ENCODE measurements at regions of chr2 and their contacts with region 1.

Region 1: DNA sequence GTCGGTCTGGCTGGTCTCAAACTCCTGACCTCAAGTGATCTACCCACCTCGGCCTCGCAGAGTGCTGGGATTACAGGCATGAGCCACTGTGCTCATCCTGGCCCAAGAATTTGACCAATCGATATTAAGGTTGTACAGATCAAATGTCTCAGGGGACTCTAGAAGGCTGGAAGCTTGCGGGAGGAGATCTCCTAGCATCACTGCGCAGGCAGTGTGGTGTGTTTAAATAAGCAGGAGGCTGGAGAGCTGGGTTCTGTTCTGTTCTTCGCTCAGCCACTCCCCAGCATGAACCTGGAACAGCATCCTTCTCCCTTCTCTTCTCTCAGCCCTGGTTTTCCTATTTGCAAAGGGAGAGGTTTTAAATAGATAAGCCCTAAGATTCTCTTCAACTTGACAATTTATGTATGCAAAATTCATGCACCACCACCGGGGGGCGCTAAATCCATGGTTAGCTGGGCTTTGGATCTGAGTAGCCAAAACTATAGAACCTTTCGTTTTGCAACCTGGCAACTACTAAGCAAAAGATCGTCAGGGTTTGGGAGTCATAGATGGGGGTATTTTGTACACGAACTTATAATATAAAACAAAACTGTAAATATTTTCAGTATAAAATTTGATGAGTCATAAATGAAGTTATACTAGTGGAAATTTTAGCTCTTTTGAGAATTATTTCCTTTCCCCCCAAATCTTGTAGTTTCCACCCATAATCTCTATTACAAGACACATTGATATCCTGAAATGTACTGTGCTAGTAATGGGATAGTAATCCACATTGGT is 60.6 kb downstream of the SLC16A14 start:
- DNase-seq: peak; percentile 26
- ATAC-seq: peak; percentile 88
- H3K4me3 ChIP-seq: no peak overlapping the region
- H3K27ac ChIP-seq: no peak overlapping the region
- H3K4me1 ChIP-seq: no peaks in the 10 kb centered on the region
- H3K27me3 ChIP-seq: no peaks in the 10 kb centered on the region
- CTCF ChIP-seq: peak; percentile 80 to 84 (median 80)
- EP300 ChIP-seq: no peak
- POLR2A ChIP-seq: no peak
- RAD21 ChIP-seq: peak; percentile 98

Region 2: DNA sequence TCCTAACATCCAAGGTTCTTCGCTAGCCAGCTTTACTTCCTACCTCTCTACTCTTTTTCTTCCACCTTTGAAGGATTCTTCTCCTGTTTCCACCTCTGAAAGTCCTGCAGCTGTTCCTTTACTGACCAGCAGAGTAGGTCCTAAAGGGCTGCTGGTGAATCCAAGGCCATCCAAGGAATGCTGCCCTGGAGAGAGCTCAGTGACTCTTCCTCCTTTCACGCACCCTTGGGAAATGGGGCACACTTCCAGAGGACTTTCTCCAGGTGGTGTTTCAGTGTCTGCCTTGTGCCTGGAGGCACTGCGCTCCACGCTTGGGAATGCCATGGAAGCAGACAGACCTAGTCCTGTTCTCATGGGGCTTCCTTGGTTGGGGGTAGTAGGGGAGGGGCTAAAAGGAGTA is 15.2 kb after region 1 on chr2:
- CTCF ChIA-PET with region 1: interaction called, 14 read pairs
- POLR2A ChIA-PET with region 1: no interaction called
- RAD21 ChIA-PET with region 1: interaction called, 3 read pairs
- SMC1A ChIA-PET with region 1: interaction called, 10 read pairs
- in situ Hi-C with region 1: no loop called
- intact Hi-C with region 1: no loop called
- DNase-seq: no peak
- ATAC-seq: no peak
- H3K4me3 ChIP-seq: no peak overlapping the region
- H3K27ac ChIP-seq: no peak overlapping the region
- H3K4me1 ChIP-seq: no peaks in the 10 kb centered on the region
- H3K27me3 ChIP-seq: no peaks in the 10 kb centered on the region
- CTCF ChIP-seq: no peak
- EP300 ChIP-seq: no peak
- POLR2A ChIP-seq: no peak
- RAD21 ChIP-seq: no peak

Region 3: DNA sequence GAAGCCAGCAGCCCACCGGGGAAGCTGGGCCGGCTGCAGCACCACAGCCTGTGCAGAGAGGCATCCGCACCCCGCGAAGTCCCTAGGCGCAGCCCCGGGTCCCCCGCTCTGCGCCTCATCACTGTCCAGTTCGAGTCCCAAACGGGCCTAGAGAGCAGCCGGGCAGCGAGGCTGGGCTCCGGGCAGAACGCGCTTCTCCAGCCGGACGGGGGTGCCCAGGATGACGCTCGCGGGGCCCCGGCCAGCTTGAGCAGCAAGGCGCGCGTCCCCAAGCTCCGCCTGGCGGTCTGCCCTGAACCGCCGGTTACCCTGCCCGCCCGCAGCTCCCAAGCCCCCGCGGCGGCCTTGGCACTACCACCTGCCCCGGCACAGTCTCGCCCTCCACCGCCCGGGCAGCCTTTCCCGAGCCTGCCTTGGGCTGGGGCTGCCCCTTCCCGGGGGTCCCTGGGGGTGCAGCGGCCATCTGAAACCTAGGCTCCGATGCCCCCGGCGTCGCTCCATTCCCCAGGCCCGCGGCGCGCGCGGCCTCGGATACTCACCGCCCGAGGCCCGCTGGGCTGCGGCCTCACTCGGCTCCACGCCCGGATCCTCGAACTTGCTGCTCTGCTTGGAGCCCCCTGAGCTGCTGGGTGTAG is 60.0 kb after region 1 on chr2:
- CTCF ChIA-PET with region 1: interaction called, 13 read pairs
- POLR2A ChIA-PET with region 1: interaction called, 4 read pairs
- RAD21 ChIA-PET with region 1: interaction called, 4 read pairs
- SMC1A ChIA-PET with region 1: interaction called, 6 read pairs
- in situ Hi-C with region 1: no loop called
- intact Hi-C with region 1: loop called (anchors 5 kb)
- DNase-seq: no peak
- ATAC-seq: peak; percentile 66
- H3K4me3 ChIP-seq: peak overlapping the region; percentile 82
- H3K27ac ChIP-seq: peak overlapping the region; percentile 56; the same call in 1 of the 2 replicates
- H3K4me1 ChIP-seq: peaks cover 5% of the 10 kb centered on the region
- H3K27me3 ChIP-seq: peaks cover 0 to 2% of the 10 kb centered on the region in 2 experiments; a peak in 1 of 4 replicates
- CTCF ChIP-seq: peak; percentile 2 to 15 (median 12); a peak in 1 of 6 replicates
- EP300 ChIP-seq: no peak
- POLR2A ChIP-seq: peak; percentile 48
- RAD21 ChIP-seq: no peak

Region 4: GRCh38 chr2:230160112-230160660 is 152.1 kb after region 1 on chr2:
- CTCF ChIA-PET with region 1: interaction called, 60 read pairs
- POLR2A ChIA-PET with region 1: no interaction called
- RAD21 ChIA-PET with region 1: interaction called, 15 read pairs
- SMC1A ChIA-PET with region 1: interaction called, 32 read pairs
- in situ Hi-C with region 1: loop called (anchors 5 kb)
- intact Hi-C with region 1: loop called (anchors 1 kb)
- DNase-seq: peak; percentile 9
- ATAC-seq: peak; percentile 81
- H3K4me3 ChIP-seq: no peak overlapping the region
- H3K27ac ChIP-seq: no peak overlapping the region
- H3K4me1 ChIP-seq: no peaks in the 10 kb centered on the region
- H3K27me3 ChIP-seq: no peaks in the 10 kb centered on the region
- CTCF ChIP-seq: peak; percentile 63 to 70 (median 65)
- EP300 ChIP-seq: no peak
- POLR2A ChIP-seq: no peak
- RAD21 ChIP-seq: peak; percentile 86

Region 5: GRCh38 chr2:230814616-230815015 is 806.5 kb after region 1 on chr2:
- CTCF ChIA-PET with region 1: interaction called, 4 read pairs
- POLR2A ChIA-PET with region 1: no interaction called
- RAD21 ChIA-PET with region 1: no interaction called
- SMC1A ChIA-PET with region 1: interaction called, 4 read pairs
- in situ Hi-C with region 1: loop called (anchors 10 kb)
- intact Hi-C with region 1: loop called (anchors 5 kb)
- DNase-seq: no peak
- ATAC-seq: peak; percentile 77
- H3K4me3 ChIP-seq: no peak overlapping the region
- H3K27ac ChIP-seq: no peak overlapping the region
- H3K4me1 ChIP-seq: no peaks in the 10 kb centered on the region
- H3K27me3 ChIP-seq: no peaks in the 10 kb centered on the region
- CTCF ChIP-seq: peak; percentile 38 to 50 (median 45); a peak in 4 of 6 replicates
- EP300 ChIP-seq: no peak
- POLR2A ChIP-seq: no peak
- RAD21 ChIP-seq: peak; percentile 72